Endothelial cell of umbilical vein (primary cell): ENCODE measurements at regions of chr12 and their contacts with region 1.

Region 1: GRCh38 chr12:85823436-85824180 is 12.6 kb downstream of the RASSF9 start:
- DNase-seq: peak; percentile 58
- H3K4me3 ChIP-seq: no peak overlapping the region
- H3K27ac ChIP-seq: no peak overlapping the region
- H3K4me1 ChIP-seq: peaks cover 22% of the 10 kb centered on the region
- H3K27me3 ChIP-seq: no peaks in the 10 kb centered on the region
- CTCF ChIP-seq: no peak
- POLR2A ChIP-seq: no peak

Region 2: GRCh38 chr12:85720308-85721033 is 103.1 kb before region 1 on chr12:
- CTCF ChIA-PET with region 1: no interaction called
- POLR2A ChIA-PET with region 1: no interaction called
- dilution Hi-C with region 1: no loop called
- intact Hi-C with region 1: loop called (anchors 5 kb)
- DNase-seq: peak; percentile 59
- H3K4me3 ChIP-seq: no peak overlapping the region
- H3K27ac ChIP-seq: peak overlapping the region; percentile 66
- H3K4me1 ChIP-seq: peaks cover 17% of the 10 kb centered on the region
- H3K27me3 ChIP-seq: no peaks in the 10 kb centered on the region
- CTCF ChIP-seq: no peak
- POLR2A ChIP-seq: no peak

Region 3: GRCh38 chr12:85836197-85837090 is 12.8 kb after region 1 on chr12 and contains the start of gene RASSF9:
- CTCF ChIA-PET with region 1: interaction called, 14 read pairs
- POLR2A ChIA-PET with region 1: interaction called, 5 read pairs
- dilution Hi-C with region 1: no loop called
- intact Hi-C with region 1: loop called (anchors 1 kb)
- DNase-seq: peak; percentile 84
- H3K4me3 ChIP-seq: peak within 1 kb of the TSS; percentile 5 to 89 (median 39)
- H3K27ac ChIP-seq: peak within 1 kb of the TSS; percentile 49
- H3K4me1 ChIP-seq: peaks cover 15% of the 10 kb centered on the region
- H3K27me3 ChIP-seq: no peaks in the 10 kb centered on the region
- CTCF ChIP-seq: no peak
- POLR2A ChIP-seq: no peak
- total RNA-seq, gene RASSF9: 2.3 and 3.6 TPM in 2 replicates